CD4-positive, alpha-beta T cell (primary cell): ENCODE measurements at regions of chr9 and their contacts with region 1.

Region 1: GRCh38 chr9:121399883-121400607 is 30.0 kb upstream of the STOM start:
- DNase-seq: peak in 3 of 14 experiments; percentile 68 to 81 (median 76)
- ATAC-seq: no peak
- H3K4me3 ChIP-seq: no peak overlapping the region
- H3K4me3 Mint-ChIP-seq: no peak overlapping the region
- H3K27ac ChIP-seq: no peak overlapping the region
- H3K27ac Mint-ChIP-seq: no peak overlapping the region
- H3K4me1 ChIP-seq: no peaks in the 10 kb centered on the region
- H3K4me1 Mint-ChIP-seq: no peaks in the 10 kb centered on the region
- H3K27me3 ChIP-seq: no peaks in the 10 kb centered on the region
- H3K27me3 Mint-ChIP-seq: peaks cover 5% of the 10 kb centered on the region
- CTCF ChIP-seq: peak; percentile 83

Region 2: GRCh38 chr9:120742951-120743416 is 657.1 kb before region 1 on chr9:
- CTCF ChIA-PET with region 1: no interaction called
- POLR2A ChIA-PET with region 1: no interaction called
- intact Hi-C with region 1: loop called in 1 of 2 experiments (anchors 5 kb)
- DNase-seq: peak in 3 of 14 experiments; percentile 40 to 54 (median 52)
- ATAC-seq: peak; percentile 68
- H3K4me3 ChIP-seq: no peak overlapping the region
- H3K4me3 Mint-ChIP-seq: no peak overlapping the region
- H3K27ac ChIP-seq: no peak overlapping the region
- H3K27ac Mint-ChIP-seq: no peak overlapping the region
- H3K4me1 ChIP-seq: no peaks in the 10 kb centered on the region
- H3K4me1 Mint-ChIP-seq: no peaks in the 10 kb centered on the region
- H3K27me3 ChIP-seq: no peaks in the 10 kb centered on the region
- H3K27me3 Mint-ChIP-seq: no peaks in the 10 kb centered on the region
- CTCF ChIP-seq: peak; percentile 68

Region 3: GRCh38 chr9:120985810-120986222 is 414.2 kb before region 1 on chr9:
- CTCF ChIA-PET with region 1: no interaction called
- POLR2A ChIA-PET with region 1: no interaction called
- intact Hi-C with region 1: loop called in 1 of 2 experiments (anchors 10 kb)
- DNase-seq: peak in 1 of 14 experiments; percentile 4
- ATAC-seq: no peak
- H3K4me3 ChIP-seq: no peak overlapping the region
- H3K4me3 Mint-ChIP-seq: no peak overlapping the region
- H3K27ac ChIP-seq: no peak overlapping the region
- H3K27ac Mint-ChIP-seq: no peak overlapping the region
- H3K4me1 ChIP-seq: no peaks in the 10 kb centered on the region
- H3K4me1 Mint-ChIP-seq: peaks cover 5% of the 10 kb centered on the region
- H3K27me3 ChIP-seq: no peaks in the 10 kb centered on the region
- H3K27me3 Mint-ChIP-seq: no peaks in the 10 kb centered on the region
- CTCF ChIP-seq: no peak

Region 4: DNA sequence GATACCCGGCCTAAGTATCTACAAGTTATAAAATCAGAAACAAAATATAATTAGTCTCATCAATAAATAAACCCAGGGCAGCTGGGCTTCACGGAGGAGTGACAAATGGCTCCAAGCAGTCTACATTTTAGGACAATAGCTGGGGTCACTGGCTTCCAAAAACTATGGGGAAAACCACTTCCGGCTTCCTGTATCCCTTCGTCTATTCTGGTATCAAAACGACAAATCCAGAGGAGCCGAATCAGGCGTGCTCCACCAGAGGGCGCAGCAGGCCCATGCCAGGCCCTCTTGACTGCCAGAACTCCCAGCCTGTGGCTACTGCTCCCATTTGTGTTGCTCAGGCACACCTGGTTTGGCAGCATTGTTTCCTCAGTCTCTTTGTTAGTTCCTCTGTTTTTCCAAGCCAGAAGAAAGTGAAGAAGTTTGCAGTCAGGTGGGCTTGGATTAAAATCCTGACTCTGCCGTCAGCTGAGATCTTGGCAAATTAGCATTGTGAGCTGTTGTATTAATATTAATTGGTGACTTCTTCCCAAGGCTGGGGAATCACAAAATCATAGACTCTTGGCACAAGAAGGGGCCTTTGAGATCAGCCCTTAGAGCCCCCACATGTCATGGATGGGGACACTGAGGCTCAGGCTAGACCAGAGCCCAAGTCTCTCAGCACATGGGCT is 186.8 kb before region 1 on chr9:
- CTCF ChIA-PET with region 1: no interaction called
- POLR2A ChIA-PET with region 1: no interaction called
- intact Hi-C with region 1: loop called (anchors 1 kb)
- DNase-seq: peak; percentile 31 to 80 (median 56)
- ATAC-seq: peak; percentile 70
- H3K4me3 ChIP-seq: no peak overlapping the region
- H3K4me3 Mint-ChIP-seq: no peak overlapping the region
- H3K27ac ChIP-seq: no peak overlapping the region
- H3K27ac Mint-ChIP-seq: no peak overlapping the region
- H3K4me1 ChIP-seq: peaks cover 5% of the 10 kb centered on the region
- H3K4me1 Mint-ChIP-seq: peaks cover 6% of the 10 kb centered on the region
- H3K27me3 ChIP-seq: no peaks in the 10 kb centered on the region
- H3K27me3 Mint-ChIP-seq: no peaks in the 10 kb centered on the region
- CTCF ChIP-seq: peak; percentile 80

Region 5: GRCh38 chr9:121376214-121376830 is 23.7 kb before region 1 on chr9:
- CTCF ChIA-PET with region 1: interaction called, 4 read pairs
- POLR2A ChIA-PET with region 1: no interaction called
- intact Hi-C with region 1: loop called in 1 of 2 experiments (anchors 2 kb)
- DNase-seq: peak in 3 of 14 experiments; percentile 39 to 44 (median 44)
- ATAC-seq: no peak
- H3K4me3 ChIP-seq: no peak overlapping the region
- H3K4me3 Mint-ChIP-seq: no peak overlapping the region
- H3K27ac ChIP-seq: no peak overlapping the region
- H3K27ac Mint-ChIP-seq: no peak overlapping the region
- H3K4me1 ChIP-seq: no peaks in the 10 kb centered on the region
- H3K4me1 Mint-ChIP-seq: peaks cover 20% of the 10 kb centered on the region
- H3K27me3 ChIP-seq: no peaks in the 10 kb centered on the region
- H3K27me3 Mint-ChIP-seq: no peaks in the 10 kb centered on the region
- CTCF ChIP-seq: peak; percentile 44

Region 6: DNA sequence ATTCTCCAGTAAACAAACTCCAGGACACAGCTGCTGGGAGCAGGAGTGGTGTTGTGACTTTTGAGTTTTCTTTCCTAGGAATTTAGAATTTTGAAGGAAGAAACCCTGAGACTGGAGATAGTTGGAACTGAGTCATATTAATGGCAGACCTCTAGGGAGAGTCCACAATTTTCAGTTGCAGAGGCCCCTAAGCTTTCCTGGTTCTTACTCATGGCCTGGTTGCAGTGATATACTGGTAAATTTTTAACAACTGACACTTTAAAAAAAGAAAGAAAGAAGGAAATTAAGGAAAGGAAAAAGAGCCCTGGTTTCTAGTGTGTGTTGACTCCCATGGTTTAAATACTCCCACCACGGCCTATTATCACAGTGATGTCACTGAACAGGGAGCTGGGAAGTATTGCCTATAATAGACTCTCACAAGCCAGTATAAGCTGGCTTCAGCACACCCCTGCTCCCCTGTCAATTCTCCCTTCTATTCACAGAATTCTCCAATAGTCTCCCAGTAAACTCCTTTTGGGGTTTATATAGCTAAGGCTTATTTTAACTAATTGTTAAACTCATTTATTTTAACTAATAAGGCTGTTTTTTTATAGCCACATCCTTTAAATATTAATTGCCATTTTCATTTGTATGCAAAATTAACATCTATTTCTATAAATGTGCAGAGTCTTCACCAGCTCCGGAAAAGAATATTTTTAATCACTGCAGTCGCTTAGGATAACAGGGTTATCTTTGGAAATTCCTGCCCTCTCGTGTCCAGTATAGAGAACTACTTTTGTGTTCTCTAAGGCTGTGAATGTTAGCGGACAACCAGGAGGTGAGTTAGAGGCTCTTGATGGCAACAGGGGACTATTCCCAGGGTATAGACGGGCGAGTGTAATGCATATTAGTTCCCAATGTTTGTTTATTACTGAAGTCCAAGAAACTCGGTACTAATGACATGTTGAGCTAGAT is 39.9 kb after region 1 on chr9:
- CTCF ChIA-PET with region 1: no interaction called
- POLR2A ChIA-PET with region 1: no interaction called
- intact Hi-C with region 1: no loop called
- DNase-seq: no peak
- ATAC-seq: no peak
- H3K4me3 ChIP-seq: no peak overlapping the region
- H3K4me3 Mint-ChIP-seq: no peak overlapping the region
- H3K27ac ChIP-seq: no peak overlapping the region
- H3K27ac Mint-ChIP-seq: no peak overlapping the region
- H3K4me1 ChIP-seq: no peaks in the 10 kb centered on the region
- H3K4me1 Mint-ChIP-seq: no peaks in the 10 kb centered on the region
- H3K27me3 ChIP-seq: peaks cover 2 to 14% of the 10 kb centered on the region in 2 experiments
- H3K27me3 Mint-ChIP-seq: peaks cover 41% of the 10 kb centered on the region
- CTCF ChIP-seq: no peak

Region 7: GRCh38 chr9:121474231-121474891 is 74.3 kb after region 1 on chr9:
- CTCF ChIA-PET with region 1: no interaction called
- POLR2A ChIA-PET with region 1: no interaction called
- intact Hi-C with region 1: no loop called
- DNase-seq: no peak
- ATAC-seq: no peak
- H3K4me3 ChIP-seq: no peak overlapping the region
- H3K4me3 Mint-ChIP-seq: no peak overlapping the region
- H3K27ac ChIP-seq: no peak overlapping the region
- H3K27ac Mint-ChIP-seq: no peak overlapping the region
- H3K4me1 ChIP-seq: no peaks in the 10 kb centered on the region
- H3K4me1 Mint-ChIP-seq: no peaks in the 10 kb centered on the region
- H3K27me3 ChIP-seq: peaks cover 0 to 15% of the 10 kb centered on the region in 2 experiments
- H3K27me3 Mint-ChIP-seq: peaks cover 30% of the 10 kb centered on the region
- CTCF ChIP-seq: no peak